Right ventricle myocardium superior (tissue), 1 donor: ENCODE measurements at regions of chr6 and their contacts with region 1.

Region 1: DNA sequence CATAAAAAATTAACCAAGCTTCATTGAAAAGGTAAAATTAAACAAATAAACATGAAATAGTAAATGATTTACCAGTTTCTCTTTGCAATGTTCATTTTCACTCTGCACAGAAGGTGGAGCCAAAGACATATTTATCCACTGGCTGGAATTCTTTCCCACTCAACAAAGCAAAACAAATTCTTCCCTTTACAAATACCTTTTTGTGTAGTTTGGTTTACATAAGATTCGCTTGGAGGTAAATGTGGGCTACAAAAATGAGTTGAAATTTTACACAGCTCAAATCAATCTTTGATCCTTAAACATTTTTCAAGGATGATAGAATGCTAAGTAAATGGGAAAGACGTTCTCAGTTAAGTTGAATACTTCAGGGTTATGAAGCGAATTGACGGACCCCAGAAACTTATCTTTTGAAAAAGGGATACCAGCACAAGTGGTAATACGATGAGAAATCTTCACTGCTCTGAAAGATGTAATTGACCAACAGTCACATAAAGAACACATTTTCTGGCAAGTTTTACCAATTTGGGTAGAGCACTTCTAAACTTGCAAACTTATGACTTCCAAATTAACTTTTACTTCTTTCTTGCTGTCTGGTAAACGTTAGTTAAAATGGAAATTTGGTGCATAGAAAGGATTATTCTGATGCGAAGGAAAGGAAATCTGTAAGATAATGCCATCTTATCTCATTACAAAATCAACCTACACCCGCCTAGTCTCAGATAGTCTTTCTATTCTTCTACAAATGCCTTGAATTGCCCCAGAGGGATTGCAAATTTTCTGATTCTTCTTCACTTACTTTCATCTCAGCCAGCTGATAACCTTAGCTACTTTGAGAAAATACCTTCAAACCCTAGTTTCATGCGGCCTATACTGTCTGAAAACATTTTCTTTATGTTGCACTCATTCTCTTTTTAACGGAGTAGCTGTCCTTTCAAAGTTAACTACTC is 4.7 kb upstream of the GJA1 start:
- DNase-seq: no peak
- ATAC-seq: peak; percentile 47

Region 2: GRCh38 chr6:121849477-121849876 is 418.7 kb after region 1 on chr6:
- intact Hi-C with region 1: loop called (anchors 5 kb)
- DNase-seq: no peak
- ATAC-seq: peak; percentile 82

Region 3: DNA sequence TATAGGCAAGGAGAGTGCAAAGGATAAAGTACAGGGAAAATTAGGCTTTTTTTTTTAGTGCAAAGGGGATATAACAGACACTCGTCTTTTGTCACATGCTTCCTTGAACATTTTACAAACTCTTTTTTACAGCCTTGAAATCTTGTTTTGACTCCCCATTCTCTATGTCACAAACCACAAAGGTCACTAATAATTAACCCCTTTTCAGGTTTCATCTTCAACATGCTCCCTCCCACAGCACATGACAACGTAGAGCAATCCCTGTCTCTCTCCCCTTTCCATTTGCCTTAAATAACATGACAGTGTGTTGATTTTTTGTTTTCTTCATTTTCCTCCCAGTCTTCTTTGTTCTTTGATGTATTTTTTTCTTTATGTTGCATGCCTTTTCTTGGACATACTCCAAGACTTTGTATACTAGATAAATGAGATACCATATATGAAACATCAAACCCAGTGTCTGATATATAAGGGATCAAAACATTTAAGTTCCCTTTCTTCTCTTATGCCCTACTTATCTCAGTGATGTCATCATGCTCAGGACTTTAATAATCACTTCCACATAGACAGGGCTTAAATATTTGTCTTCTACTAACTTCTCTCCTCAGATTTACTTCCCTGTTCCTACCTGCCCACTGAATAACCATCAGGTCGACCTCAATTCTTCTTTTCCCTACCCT is 589.9 kb after region 1 on chr6:
- intact Hi-C with region 1: loop called (anchors 5 kb)
- DNase-seq: no peak
- ATAC-seq: no peak

Region 4: DNA sequence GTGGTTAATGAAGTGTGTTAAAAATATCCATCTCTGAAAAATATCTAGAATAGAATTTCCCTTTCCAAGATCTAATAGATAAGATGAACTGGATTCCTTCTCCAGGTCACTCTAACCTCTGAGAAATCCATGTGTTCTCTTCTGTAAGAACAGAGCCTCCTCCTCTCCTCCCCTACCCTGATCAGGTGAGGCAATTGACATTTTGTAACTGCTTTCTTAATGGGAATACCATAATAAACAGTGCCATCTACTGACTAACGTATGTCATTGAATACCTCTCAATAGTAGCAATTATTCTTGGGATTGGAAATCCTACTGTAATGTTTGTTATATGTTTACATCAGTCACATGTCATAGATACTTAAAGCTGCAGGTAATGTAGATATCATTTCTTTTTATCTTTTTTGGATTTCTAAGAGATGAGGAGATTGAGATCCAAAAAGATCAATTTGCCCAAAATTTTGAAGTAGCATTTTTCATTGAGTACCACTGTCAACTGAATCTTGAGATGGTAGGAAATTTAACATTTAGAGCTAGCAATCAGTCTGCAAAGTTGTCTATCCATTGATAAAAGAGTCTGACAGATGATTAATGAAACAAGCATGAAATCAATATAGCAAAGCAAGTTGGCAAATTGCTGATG is 602.9 kb after region 1 on chr6:
- intact Hi-C with region 1: loop called (anchors 5 kb)
- DNase-seq: no peak
- ATAC-seq: peak; percentile 93

Region 5: GRCh38 chr6:122184401-122184827 is 753.6 kb after region 1 on chr6:
- intact Hi-C with region 1: loop called (anchors 2 kb)
- DNase-seq: no peak
- ATAC-seq: peak; percentile 84

Region 6: DNA sequence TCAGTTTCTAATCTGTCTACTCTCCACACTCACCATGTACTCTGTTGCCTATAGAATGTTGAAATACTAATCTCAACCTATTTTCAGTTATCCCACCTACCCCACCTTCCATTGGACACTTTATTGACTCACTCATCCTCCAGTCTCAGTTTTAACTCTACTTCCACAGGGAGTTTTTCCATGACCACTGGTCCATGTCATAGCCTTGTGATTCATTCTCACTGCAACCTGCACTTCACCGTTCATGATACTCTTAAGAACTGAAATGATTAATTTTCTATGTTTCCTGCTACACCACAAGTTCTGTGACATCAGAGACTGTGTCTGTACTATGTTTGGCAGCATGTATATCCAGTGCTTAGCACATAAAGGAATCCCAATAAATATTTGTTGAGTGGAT is 845.9 kb after region 1 on chr6:
- intact Hi-C with region 1: loop called (anchors 10 kb)
- DNase-seq: no peak
- ATAC-seq: no peak